ENCODE measurements at regions of chr6 and their contacts with region 1.

Region 1: DNA sequence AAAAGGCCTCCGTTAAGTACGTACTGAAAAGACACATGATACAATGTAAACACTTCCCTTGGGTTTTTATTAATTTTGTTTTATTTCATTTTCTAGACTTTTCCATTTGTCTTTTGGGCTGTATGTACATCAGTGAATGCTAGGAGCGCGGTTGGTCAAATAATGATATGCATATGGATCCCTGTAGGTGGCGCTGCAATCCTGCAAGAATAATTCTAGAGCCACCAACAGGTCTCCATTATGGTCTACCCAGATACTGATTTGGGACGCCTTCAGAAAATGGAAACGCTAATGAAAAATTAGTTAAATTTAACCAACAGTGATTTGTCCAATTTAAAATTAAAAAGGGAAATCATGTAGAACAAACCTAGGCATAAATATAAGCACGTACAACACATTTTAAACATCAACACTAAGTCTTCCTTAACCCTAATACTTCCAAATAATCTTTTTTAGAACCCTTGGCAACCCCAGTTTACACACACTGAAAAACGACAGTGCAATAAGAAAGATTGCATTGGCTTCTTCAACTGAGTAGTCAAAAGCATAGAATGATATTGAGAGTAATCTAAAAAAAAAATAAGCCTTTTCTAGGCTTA is 433.5 kb downstream of the RFPL4B start:
- DNase-seq: peak; percentile 47
- CTCF ChIP-seq: peak; percentile 57

Region 2: GRCh38 chr6:112450663-112451062 is 329.9 kb before region 1 on chr6:
- CTCF ChIA-PET with region 1: no interaction called
- POLR2A ChIA-PET with region 1: no interaction called
- DNase-seq: no peak
- CTCF ChIP-seq: no peak

Region 3: GRCh38 chr6:112806163-112806900 is 25.7 kb after region 1 on chr6:
- CTCF ChIA-PET with region 1: no interaction called
- POLR2A ChIA-PET with region 1: no interaction called
- DNase-seq: no peak
- CTCF ChIP-seq: no peak

Region 4: DNA sequence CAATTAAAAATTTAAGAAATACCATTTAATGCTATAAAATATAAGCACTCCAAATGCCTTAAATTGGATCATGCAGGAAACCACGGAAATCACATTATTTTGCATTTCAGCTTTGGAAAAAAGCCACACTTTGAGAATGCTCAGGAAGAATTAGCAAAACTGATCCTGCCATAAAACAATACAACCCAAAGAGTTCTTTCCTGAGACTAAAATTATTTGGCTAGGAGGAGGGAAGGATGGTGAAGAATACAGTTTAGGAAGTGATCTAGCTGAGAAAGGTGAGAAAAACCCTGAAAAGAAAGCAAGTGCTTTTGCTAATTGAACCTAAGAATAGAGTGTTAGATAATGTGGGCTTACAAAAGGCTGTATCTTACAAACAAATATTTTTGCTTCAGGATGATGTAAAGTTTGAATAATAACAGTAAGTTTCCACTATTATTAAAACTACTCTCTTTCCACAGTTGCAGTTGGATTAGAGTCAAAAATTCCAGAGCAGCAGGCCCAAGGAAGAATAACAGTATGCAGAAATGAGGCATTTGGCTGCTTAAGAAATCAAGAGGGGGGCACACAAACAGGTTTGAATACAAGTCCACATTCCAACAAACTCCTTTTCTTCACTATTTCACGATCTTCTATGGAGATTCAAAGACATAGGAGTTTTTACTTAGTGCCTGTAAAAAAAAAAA is 132.0 kb after region 1 on chr6:
- CTCF ChIA-PET with region 1: no interaction called
- POLR2A ChIA-PET with region 1: no interaction called
- DNase-seq: no peak
- CTCF ChIP-seq: no peak

Region 5: DNA sequence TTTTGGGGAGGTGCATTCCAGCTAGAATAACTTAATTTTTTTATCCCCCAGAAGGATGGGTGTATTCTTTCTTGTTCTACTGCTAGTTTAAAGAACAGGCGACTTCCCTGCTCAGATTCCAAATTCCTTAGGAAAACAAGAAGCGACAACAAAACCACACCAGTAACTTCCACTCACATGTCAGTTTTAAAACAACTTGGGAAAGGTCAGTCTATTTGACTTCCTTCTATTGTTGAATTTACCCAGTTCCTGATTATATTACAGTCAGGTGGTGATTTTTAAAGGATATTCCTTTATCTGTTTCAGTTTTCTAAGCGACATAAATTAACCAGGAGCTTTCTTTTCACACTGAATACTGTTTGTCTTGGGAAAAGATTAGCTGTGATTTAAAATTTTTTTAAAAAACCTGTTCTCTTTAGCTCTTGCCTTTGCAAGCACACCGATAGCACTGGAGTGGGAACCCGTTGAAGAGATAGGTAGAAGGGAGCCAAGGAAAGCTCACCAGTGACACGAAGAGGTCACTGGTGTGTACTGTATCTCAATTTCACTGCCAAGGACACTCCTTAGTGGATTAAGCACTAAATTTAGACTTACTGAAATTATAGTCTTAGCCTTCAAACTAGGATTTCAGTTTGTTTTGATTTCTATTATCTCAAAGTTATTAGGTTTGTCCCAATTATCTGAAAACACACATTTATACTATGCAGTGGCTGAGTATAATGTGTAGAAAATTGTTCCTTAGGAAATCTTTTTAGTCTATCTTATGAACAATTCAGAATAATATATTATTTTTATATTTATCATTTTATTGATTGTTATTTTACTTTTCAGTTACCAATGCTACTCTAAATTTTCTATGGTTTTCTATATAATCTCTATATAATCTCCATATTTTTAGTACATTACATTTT is 1098.8 kb after region 1 on chr6:
- CTCF ChIA-PET with region 1: interaction called, 12 read pairs
- POLR2A ChIA-PET with region 1: no interaction called
- DNase-seq: peak; percentile 52
- CTCF ChIP-seq: peak; percentile 81